Tibial artery (tissue), 4 donors: ENCODE measurements at regions of chr13 and their contacts with region 1.

Region 1: DNA sequence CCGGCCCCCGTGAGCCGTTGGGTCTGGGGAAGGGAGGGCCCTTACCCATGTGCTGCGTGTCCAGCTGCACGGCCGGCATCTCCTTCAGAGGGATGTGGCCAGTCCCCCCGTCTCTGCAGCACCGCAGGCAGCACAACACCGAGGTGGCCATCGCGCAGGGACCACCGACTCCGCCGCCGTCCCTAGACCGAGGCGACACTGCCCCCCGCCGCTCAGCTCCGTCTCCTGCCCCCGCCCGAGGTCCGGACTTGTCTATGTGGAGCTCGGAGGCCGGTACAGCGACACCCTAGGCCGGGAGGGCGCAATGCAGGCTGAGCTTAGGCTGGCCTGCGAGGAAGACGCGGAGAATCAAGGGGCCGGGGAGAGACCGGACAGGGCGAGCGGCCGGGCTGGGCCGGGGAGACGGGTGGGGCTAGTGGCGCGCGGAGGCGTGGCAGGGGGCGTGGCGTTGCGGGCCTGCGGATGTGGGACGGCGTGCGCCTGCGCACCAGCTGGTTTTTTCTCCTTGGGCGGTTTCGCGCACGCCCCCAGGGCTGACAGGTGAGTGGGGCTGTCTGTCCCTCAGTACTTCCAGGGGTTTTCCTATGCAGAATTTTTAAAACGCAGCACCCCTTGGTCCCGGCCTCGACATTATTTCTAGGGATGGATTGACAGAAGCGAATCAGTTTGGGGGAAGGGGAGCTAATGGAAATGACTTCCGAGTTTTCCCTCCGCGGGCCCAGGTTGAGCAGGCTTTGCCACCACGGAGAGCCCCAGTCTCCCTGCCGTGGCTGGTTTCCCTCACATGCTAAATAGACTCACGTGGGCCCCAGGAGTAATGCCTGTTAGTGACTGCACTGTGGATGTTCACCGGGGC is at the start of gene SPRYD7:
- DNase-seq: peak; percentile 97 to 99
- H3K4me3 ChIP-seq: peak within 1 kb of the TSS; percentile 76 to 94
- H3K27ac ChIP-seq: peak within 1 kb of the TSS; percentile 78 to 91
- H3K4me1 ChIP-seq: peaks cover 0 to 42% (median 21%) of the 10 kb centered on the region in 4 donors
- H3K27me3 ChIP-seq: no peaks in the 10 kb centered on the region
- CTCF ChIP-seq: peak; percentile 92

Region 2: DNA sequence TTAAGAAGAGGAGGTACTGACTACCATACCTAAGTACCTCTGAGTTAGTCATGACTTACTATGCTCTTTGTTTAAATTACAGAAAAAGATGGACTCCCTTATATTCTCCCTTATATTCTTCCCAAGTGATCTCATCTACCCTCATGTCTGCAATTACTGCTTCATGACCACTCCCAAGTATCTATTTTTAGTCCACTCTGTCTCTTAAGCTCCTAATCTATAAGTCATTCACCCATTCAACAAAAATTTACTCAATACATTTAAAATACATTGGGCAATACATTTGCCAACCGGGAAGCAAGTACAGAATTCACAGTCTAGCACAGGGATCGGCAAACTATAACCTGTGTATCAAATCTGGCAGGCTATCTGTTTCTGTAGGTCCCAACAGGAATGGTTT is 186.5 kb before region 1 on chr13:
- intact Hi-C with region 1: no loop called
- DNase-seq: no peak
- H3K4me3 ChIP-seq: no peak overlapping the region
- H3K27ac ChIP-seq: no peak overlapping the region
- H3K4me1 ChIP-seq: no peaks in the 10 kb centered on the region
- H3K27me3 ChIP-seq: no peaks in the 10 kb centered on the region
- CTCF ChIP-seq: no peak

Region 3: DNA sequence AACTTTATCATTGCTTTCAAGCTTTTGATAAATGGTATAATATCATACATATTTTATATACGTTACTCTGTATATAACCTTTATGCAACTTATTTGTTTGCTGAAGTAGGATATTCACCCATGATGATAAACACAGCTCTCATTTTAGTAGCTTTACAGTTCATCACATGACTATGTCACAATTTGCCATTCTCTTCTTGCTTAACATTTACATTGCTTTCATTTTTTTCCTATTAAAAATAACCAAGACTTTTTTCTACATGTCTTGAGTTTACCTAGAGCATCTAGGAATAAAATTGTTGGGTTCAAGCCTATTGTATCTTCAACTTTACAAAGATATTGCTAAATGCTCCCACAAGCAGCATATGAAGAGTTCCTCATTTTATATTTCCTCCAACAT is 132.9 kb after region 1 on chr13:
- intact Hi-C with region 1: loop called (anchors 5 kb)
- DNase-seq: no peak
- H3K4me3 ChIP-seq: no peak overlapping the region
- H3K27ac ChIP-seq: peak overlapping the region; percentile 96 to 98
- H3K4me1 ChIP-seq: peaks cover 0 to 70% (median 9%) of the 10 kb centered on the region in 4 donors
- H3K27me3 ChIP-seq: no peaks in the 10 kb centered on the region
- CTCF ChIP-seq: no peak